Posterior vena cava (tissue), 2 donors: ENCODE measurements at regions of chr9 and their contacts with region 1.

Region 1: GRCh38 chr9:107883496-107884124 is 394.0 kb upstream of the KLF4 start:
- DNase-seq: no peak

Region 2: GRCh38 chr9:107755284-107755683 is 128.3 kb before region 1 on chr9:
- intact Hi-C with region 1: loop called in 1 of 2 experiments (anchors 1 kb)
- DNase-seq: no peak

Region 3: GRCh38 chr9:108077556-108077955 is 193.9 kb after region 1 on chr9:
- intact Hi-C with region 1: loop called in 1 of 2 experiments (anchors 2 kb)
- DNase-seq: no peak